ENCODE measurements at regions of chr10 and their contacts with region 1.

Region 1: GRCh38 chr10:67779465-67780203 is 58.4 kb downstream of the DNAJC12 start:
- DNase-seq: peak in 1 of 2 experiments; percentile 54
- H3K4me3 ChIP-seq: no peak overlapping the region
- H3K27ac ChIP-seq: no peak overlapping the region
- H3K4me1 ChIP-seq: no peaks in the 10 kb centered on the region
- H3K27me3 ChIP-seq: no peaks in the 10 kb centered on the region
- CTCF ChIP-seq: peak in 2 of 3 experiments; percentile 74 to 83; a peak in 3 of 4 replicates
- EP300 ChIP-seq: no peak
- POLR2A ChIP-seq: no peak
- RAD21 ChIP-seq: peak; percentile 94 to 96

Region 2: GRCh38 chr10:67452892-67453291 is 326.7 kb before region 1 on chr10:
- CTCF ChIA-PET with region 1: no interaction called
- POLR2A ChIA-PET with region 1: no interaction called
- DNase-seq: no peak
- H3K4me3 ChIP-seq: no peak overlapping the region
- H3K27ac ChIP-seq: no peak overlapping the region
- H3K4me1 ChIP-seq: no peaks in the 10 kb centered on the region
- H3K27me3 ChIP-seq: no peaks in the 10 kb centered on the region
- CTCF ChIP-seq: no peak
- EP300 ChIP-seq: no peak
- POLR2A ChIP-seq: no peak
- RAD21 ChIP-seq: no peak

Region 3: DNA sequence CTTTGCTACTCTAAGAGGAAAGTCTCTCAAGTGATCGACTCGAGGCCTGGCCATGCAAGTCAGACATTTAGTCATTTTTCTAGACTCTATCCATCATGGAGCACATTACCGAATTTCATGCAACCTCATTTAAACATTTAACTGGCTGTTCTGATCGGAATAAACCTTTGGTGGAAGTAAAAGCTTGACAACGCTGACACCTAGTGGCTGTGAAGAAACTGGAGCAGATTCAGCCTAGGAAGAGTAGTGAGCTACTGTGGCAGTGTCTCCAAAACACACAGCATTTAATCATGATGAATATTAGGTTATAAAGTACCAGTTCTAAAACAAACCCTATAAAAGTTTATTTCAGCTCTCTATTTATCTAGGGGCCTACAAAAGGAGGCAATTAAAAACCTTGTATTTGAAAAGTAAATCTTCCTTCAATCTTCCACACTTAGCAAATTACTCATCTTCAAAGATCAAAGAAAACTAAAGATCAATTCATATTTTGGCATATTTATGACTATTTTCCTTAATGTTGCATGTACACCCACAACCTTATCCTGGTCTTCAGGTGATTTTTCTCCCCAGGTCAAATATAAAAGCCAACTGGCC is 258.6 kb before region 1 on chr10:
- CTCF ChIA-PET with region 1: interaction called, 15 read pairs
- POLR2A ChIA-PET with region 1: no interaction called
- DNase-seq: peak in 1 of 2 experiments; percentile 51
- H3K4me3 ChIP-seq: no peak overlapping the region
- H3K27ac ChIP-seq: no peak overlapping the region
- H3K4me1 ChIP-seq: no peaks in the 10 kb centered on the region
- H3K27me3 ChIP-seq: no peaks in the 10 kb centered on the region
- CTCF ChIP-seq: peak in 2 of 3 experiments; percentile 78 to 84; a peak in 3 of 4 replicates
- EP300 ChIP-seq: no peak
- POLR2A ChIP-seq: no peak
- RAD21 ChIP-seq: peak; percentile 97 to 98

Region 4: GRCh38 chr10:67666416-67667034 is 113.1 kb before region 1 on chr10:
- CTCF ChIA-PET with region 1: interaction called, 67 read pairs
- POLR2A ChIA-PET with region 1: no interaction called
- DNase-seq: no peak
- H3K4me3 ChIP-seq: no peak overlapping the region
- H3K27ac ChIP-seq: no peak overlapping the region
- H3K4me1 ChIP-seq: no peaks in the 10 kb centered on the region
- H3K27me3 ChIP-seq: no peaks in the 10 kb centered on the region
- CTCF ChIP-seq: peak in 2 of 3 experiments; percentile 21 to 42; a peak in 2 of 4 replicates
- EP300 ChIP-seq: no peak
- POLR2A ChIP-seq: no peak
- RAD21 ChIP-seq: peak; percentile 47 to 54

Region 5: GRCh38 chr10:67697724-67698131 is 81.9 kb before region 1 on chr10:
- CTCF ChIA-PET with region 1: interaction called, 82 read pairs
- POLR2A ChIA-PET with region 1: no interaction called
- DNase-seq: no peak
- H3K4me3 ChIP-seq: no peak overlapping the region
- H3K27ac ChIP-seq: no peak overlapping the region
- H3K4me1 ChIP-seq: no peaks in the 10 kb centered on the region
- H3K27me3 ChIP-seq: no peaks in the 10 kb centered on the region
- CTCF ChIP-seq: peak in 2 of 3 experiments; percentile 57 to 59; a peak in 3 of 4 replicates
- EP300 ChIP-seq: no peak
- POLR2A ChIP-seq: no peak
- RAD21 ChIP-seq: peak; percentile 64 to 67

Region 6: GRCh38 chr10:67705921-67706320 is 73.7 kb before region 1 on chr10:
- CTCF ChIA-PET with region 1: interaction called, 10 read pairs
- POLR2A ChIA-PET with region 1: no interaction called
- DNase-seq: no peak
- H3K4me3 ChIP-seq: no peak overlapping the region
- H3K27ac ChIP-seq: no peak overlapping the region
- H3K4me1 ChIP-seq: peaks cover 0 to 4% (median 0%) of the 10 kb centered on the region in 4 experiments; a peak in 1 of 7 replicates
- H3K27me3 ChIP-seq: no peaks in the 10 kb centered on the region
- CTCF ChIP-seq: no peak
- EP300 ChIP-seq: no peak
- POLR2A ChIP-seq: no peak
- RAD21 ChIP-seq: no peak

Region 7: DNA sequence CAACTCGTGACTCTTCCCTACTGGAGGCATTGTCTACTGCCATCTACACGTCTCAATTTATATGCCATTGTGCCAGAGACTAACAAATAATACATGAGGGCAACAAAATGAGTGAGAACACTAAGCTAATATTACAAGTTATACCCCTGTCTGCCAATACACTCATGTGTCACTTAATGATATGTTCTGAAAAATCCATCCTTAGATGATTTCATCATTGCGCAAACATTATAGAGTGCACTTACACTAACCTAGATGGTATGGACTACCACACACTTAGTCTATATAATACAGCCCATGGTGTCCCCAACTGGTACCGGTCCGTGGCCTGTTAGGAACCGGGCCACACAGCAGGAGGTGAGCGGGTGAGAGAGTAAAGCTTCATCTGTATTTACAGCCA is 19.4 kb before region 1 on chr10:
- CTCF ChIA-PET with region 1: interaction called, 19 read pairs
- POLR2A ChIA-PET with region 1: no interaction called
- DNase-seq: no peak
- H3K4me3 ChIP-seq: no peak overlapping the region
- H3K27ac ChIP-seq: no peak overlapping the region
- H3K4me1 ChIP-seq: peaks cover 0 to 2% (median 2%) of the 10 kb centered on the region in 4 experiments; a peak in 1 of 7 replicates
- H3K27me3 ChIP-seq: no peaks in the 10 kb centered on the region; a peak in 1 of 7 replicates
- CTCF ChIP-seq: no peak
- EP300 ChIP-seq: no peak
- POLR2A ChIP-seq: no peak
- RAD21 ChIP-seq: no peak

Region 8: DNA sequence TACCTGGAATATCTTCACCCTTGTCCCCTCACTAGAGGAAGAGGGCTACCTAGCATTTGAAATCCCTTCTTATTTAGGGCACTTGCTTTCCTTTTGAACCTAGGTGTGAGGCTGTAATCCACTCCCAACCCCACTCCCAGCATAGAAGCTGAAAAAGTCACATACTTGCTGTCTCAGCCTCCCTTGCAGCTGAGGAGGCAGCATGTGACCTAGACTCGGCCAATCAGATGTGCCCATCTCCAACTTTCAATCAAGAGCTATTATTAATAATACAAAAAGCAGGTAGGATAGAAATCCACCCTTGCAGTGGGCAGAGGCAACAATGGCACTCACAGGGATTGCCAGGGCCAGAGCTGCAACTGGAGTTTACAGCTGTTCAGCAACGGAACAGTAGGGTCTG is 12.4 kb before region 1 on chr10:
- CTCF ChIA-PET with region 1: interaction called, 19 read pairs
- POLR2A ChIA-PET with region 1: interaction called, 3 read pairs
- DNase-seq: no peak
- H3K4me3 ChIP-seq: no peak overlapping the region
- H3K27ac ChIP-seq: no peak overlapping the region
- H3K4me1 ChIP-seq: peaks cover 0 to 2% (median 2%) of the 10 kb centered on the region in 4 experiments; a peak in 1 of 7 replicates
- H3K27me3 ChIP-seq: no peaks in the 10 kb centered on the region; a peak in 1 of 7 replicates
- CTCF ChIP-seq: no peak
- EP300 ChIP-seq: no peak
- POLR2A ChIP-seq: no peak
- RAD21 ChIP-seq: no peak

Region 9: GRCh38 chr10:67837541-67838314 is 58.1 kb after region 1 on chr10 and contains the start of gene DNAJC12:
- CTCF ChIA-PET with region 1: no interaction called
- POLR2A ChIA-PET with region 1: no interaction called
- DNase-seq: no peak
- H3K4me3 ChIP-seq: peak within 1 kb of the TSS in 1 of 4 experiments; percentile 2; a peak in 1 of 8 replicates
- H3K27ac ChIP-seq: no peak within 1 kb of the TSS
- H3K4me1 ChIP-seq: no peaks in the 10 kb centered on the region
- H3K27me3 ChIP-seq: no peaks in the 10 kb centered on the region
- CTCF ChIP-seq: no peak
- EP300 ChIP-seq: no peak
- POLR2A ChIP-seq: no peak
- RAD21 ChIP-seq: 0 out of 4 replicates have a peak, but pooled peaks of 1 of the 2 experiments have one; percentile 14
- total RNA-seq, gene DNAJC12: 2.9 and 4.2 TPM in 2 replicates